ENCODE measurements at regions of chr7 and their contacts with region 1.

Region 1: DNA sequence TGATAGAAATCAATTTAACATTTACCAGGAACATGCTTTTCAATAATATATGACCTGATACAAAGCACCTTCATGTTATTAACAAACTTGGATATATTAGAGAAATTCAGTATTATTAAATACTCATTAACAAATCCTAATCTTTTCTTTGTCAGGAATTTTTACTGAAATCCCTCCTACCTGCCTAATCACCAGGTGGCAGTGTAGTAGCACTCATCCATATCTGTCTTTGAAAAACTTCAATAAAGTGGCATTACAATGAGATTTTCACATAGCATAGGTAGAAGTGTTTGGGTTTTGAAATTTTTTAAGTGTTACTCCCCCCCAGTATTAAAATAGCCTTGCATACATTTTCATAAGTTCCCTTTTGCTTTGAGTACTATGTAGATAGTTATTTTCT is 1246.6 kb upstream of the LRRN3 start:
- DNase-seq: peak in 3 of 14 experiments; percentile 5 to 29 (median 21)
- ATAC-seq: no peak
- H3K4me3 ChIP-seq: no peak overlapping the region
- H3K4me3 Mint-ChIP-seq: no peak overlapping the region
- H3K27ac ChIP-seq: no peak overlapping the region
- H3K27ac Mint-ChIP-seq: no peak overlapping the region
- H3K4me1 ChIP-seq: no peaks in the 10 kb centered on the region
- H3K4me1 Mint-ChIP-seq: no peaks in the 10 kb centered on the region
- H3K27me3 ChIP-seq: no peaks in the 10 kb centered on the region
- H3K27me3 Mint-ChIP-seq: no peaks in the 10 kb centered on the region
- CTCF ChIP-seq: peak; percentile 44

Region 2: DNA sequence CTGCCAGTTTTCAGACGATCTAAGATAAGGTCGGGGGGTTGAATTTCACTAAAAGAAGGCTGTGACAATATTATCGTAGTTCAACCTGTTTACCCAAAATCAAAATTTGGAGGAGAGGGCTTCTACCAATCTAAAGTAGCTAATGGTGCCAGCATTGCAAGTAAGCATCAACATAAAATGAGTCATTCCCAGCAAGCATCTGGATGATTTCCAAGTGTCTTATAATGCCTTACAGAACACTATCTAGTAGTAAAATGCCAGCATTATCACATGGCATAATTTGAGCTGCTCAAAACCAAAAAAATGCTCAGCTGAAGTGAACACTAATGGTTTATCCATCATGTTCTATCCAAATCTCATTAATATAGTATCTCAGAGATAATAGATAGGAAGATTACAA is 80.8 kb before region 1 on chr7:
- CTCF ChIA-PET with region 1: no interaction called
- POLR2A ChIA-PET with region 1: no interaction called
- intact Hi-C with region 1: no loop called
- DNase-seq: no peak
- ATAC-seq: no peak
- H3K4me3 ChIP-seq: no peak overlapping the region
- H3K4me3 Mint-ChIP-seq: no peak overlapping the region
- H3K27ac ChIP-seq: no peak overlapping the region
- H3K27ac Mint-ChIP-seq: no peak overlapping the region
- H3K4me1 ChIP-seq: no peaks in the 10 kb centered on the region
- H3K4me1 Mint-ChIP-seq: no peaks in the 10 kb centered on the region
- H3K27me3 ChIP-seq: no peaks in the 10 kb centered on the region
- H3K27me3 Mint-ChIP-seq: no peaks in the 10 kb centered on the region
- CTCF ChIP-seq: no peak

Region 3: DNA sequence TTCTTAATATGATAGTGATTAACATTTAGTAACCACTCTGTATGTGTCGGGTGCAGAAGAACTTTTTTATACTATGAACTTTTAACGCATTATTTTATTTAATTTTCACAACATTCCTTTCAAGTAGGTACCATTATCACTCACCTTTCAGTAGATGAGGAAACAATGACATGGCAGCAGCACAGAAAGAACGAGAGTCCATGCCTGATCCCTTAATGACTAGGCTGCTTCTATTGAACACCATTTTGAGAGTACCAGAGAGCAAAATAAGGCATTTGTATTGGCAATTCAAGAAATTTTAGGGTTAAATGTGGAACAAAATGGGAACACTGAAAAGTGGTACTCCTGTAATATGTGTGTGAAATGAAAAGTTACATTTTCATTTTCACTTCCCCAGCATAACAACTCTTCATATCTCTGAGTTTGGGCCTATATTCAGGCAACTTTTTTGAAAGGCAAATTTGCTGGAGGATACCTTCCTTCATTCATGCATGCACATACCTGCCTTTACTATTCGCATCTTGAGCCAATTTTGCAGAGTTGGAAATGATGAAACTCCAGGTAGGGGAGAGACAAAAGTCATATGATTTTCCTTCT is 1259.4 kb after region 1 on chr7:
- CTCF ChIA-PET with region 1: no interaction called
- POLR2A ChIA-PET with region 1: no interaction called
- intact Hi-C with region 1: loop called in 1 of 2 experiments (anchors 5 kb)
- DNase-seq: no peak
- ATAC-seq: no peak
- H3K4me3 ChIP-seq: no peak overlapping the region
- H3K4me3 Mint-ChIP-seq: no peak overlapping the region
- H3K27ac ChIP-seq: no peak overlapping the region
- H3K27ac Mint-ChIP-seq: peak overlapping the region; percentile 18
- H3K4me1 ChIP-seq: no peaks in the 10 kb centered on the region
- H3K4me1 Mint-ChIP-seq: peaks cover 68% of the 10 kb centered on the region
- H3K27me3 ChIP-seq: no peaks in the 10 kb centered on the region
- H3K27me3 Mint-ChIP-seq: no peaks in the 10 kb centered on the region
- CTCF ChIP-seq: no peak